Body of pancreas (tissue), 4 donors: ENCODE measurements at regions of chr18 and their contacts with region 1.

Region 1: DNA sequence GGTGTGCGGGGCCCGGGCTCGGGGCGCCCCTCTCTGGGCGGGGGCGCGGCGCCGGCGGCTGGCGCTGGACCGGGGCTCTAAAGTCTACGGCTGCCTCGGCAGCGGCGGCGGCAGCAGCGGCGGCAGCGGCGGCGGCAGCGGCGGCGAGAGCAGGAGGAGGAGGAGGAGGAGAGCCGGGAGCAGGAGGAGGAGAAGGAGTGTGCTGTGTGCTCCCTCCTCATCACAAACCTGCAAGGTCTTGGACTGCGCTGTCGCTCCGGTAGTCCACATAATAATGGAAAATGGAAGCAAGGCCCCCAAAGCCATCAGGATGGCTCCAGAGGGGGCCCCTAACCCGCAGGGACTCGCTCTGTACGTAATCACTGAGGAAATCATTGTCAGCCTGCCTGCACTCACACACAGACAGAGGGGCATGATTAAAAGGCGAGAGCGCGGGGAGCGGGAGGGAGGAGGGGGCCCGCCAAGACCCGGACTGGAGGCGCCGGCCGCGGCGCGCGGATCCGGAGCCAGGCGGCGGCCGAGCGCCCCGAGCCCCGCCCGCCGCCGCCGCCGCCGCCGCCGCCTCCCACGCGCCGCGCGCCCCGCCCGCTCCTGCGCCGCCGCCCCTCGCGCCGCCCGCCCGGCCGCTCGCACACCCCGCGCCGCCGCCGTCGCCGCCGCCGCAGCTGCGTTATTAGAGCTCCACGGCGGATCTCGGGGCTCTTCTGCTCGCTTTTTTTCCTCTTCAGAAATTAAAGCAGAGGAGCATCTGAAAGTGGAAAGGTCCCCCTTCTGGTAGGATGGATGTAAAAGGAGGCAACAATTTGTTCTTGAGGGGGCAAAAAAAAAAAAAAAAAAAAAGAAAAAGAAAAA is at the start of gene ZNF521:
- DNase-seq: peak; percentile 55 to 76 (median 68)
- ATAC-seq: peak; percentile 87
- H3K4me3 ChIP-seq: peak within 1 kb of the TSS in 1 of 2 donors; percentile 50
- H3K27ac ChIP-seq: peak within 1 kb of the TSS in 3 of 4 donors; percentile 45 to 62 (median 52)
- H3K4me1 ChIP-seq: peaks cover 23% of the 10 kb centered on the region
- H3K27me3 ChIP-seq: peaks cover 0 to 21% of the 10 kb centered on the region in 2 donors
- CTCF ChIP-seq: peak in 1 of 7 experiments; percentile 11
- POLR2A ChIP-seq: peak in 2 of 3 donors; percentile 28 to 34
- total RNA-seq, gene ZNF521: 3.3 to 17.4 TPM

Region 2: GRCh38 chr18:24402209-24402785 is 949.7 kb before region 1 on chr18:
- intact Hi-C with region 1: loop called (anchors 10 kb)
- DNase-seq: peak in 1 of 4 donors; percentile 13
- ATAC-seq: no peak
- H3K4me3 ChIP-seq: no peak overlapping the region
- H3K27ac ChIP-seq: no peak overlapping the region
- H3K4me1 ChIP-seq: peaks cover 6% of the 10 kb centered on the region
- H3K27me3 ChIP-seq: no peaks in the 10 kb centered on the region
- CTCF ChIP-seq: no peak
- POLR2A ChIP-seq: no peak

Region 3: GRCh38 chr18:25553631-25554263 is 201.7 kb after region 1 on chr18:
- intact Hi-C with region 1: no loop called
- DNase-seq: no peak
- ATAC-seq: no peak
- H3K4me3 ChIP-seq: no peak overlapping the region
- H3K27ac ChIP-seq: no peak overlapping the region
- H3K4me1 ChIP-seq: no peaks in the 10 kb centered on the region
- H3K27me3 ChIP-seq: no peaks in the 10 kb centered on the region
- CTCF ChIP-seq: no peak
- POLR2A ChIP-seq: no peak